Activated CD8-positive, alpha-beta memory T cell treated with anti-CD3 and anti-CD28 coated beads, Interleukin-2, amount 10 ng/mL, durations not matched to agents 7 days and 5 days (primary cell): ENCODE measurements at regions of chr6 and their contacts with region 1.

Region 1: GRCh38 chr6:144482142-144482541 is 197.0 kb downstream of the UTRN start:
- DNase-seq: peak; percentile 82
- ATAC-seq: peak; percentile 45
- H3K4me3 Mint-ChIP-seq: no peak overlapping the region
- H3K27ac Mint-ChIP-seq: peak overlapping the region; percentile 23
- H3K4me1 Mint-ChIP-seq: peaks cover 23% of the 10 kb centered on the region
- H3K27me3 Mint-ChIP-seq: no peaks in the 10 kb centered on the region

Region 2: DNA sequence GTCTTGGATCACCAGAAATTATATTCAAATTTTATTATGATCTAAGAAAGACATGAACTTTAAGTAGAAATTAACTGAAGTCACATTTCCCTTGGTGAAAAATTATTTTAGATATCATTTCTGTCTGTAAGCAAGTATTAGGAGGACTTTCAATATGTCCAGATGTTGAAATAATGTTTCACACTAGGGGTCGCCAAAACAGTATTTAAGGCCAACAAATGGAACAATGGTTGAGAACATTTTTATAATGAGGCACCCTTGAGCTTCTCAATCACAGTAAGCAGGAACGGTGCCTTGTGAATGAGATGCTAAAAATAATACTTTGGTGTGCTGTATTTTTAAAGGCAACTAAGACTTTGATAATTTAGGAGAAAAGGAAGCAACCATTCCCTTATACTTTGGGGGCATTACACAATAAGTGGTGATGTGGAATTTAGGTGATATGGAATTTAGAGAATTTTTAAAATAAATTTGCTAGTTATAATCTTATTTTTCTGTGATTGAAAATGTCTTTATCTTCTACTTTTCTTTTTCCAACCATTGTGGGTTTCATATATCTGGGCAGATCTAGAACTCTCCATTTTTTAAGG is 377.1 kb before region 1 on chr6:
- CTCF ChIA-PET with region 1: interaction called, 10 read pairs
- DNase-seq: no peak
- ATAC-seq: peak; percentile 73
- H3K4me3 Mint-ChIP-seq: no peak overlapping the region
- H3K27ac Mint-ChIP-seq: no peak overlapping the region
- H3K4me1 Mint-ChIP-seq: peaks cover 10% of the 10 kb centered on the region
- H3K27me3 Mint-ChIP-seq: no peaks in the 10 kb centered on the region

Region 3: DNA sequence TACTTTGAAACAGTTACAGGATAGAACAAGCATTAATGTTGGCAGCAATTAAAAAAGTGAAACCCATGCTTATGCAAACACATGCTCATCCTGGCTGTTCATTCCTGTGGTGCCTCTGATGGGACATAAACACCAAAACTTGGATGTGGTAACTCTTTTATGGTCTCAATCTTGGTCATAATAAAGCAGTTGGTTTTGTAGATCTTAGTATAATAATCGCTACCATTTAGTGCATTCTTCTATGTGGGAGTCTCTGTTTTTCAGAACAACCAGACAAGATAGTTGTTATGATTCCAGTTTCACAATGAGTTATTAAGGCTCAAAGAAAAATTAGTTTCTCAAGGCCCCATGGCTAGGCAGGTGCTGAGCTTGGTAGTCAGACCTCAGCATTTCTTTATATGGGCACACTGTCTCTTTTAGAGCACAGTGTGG is 13.0 kb before region 1 on chr6:
- CTCF ChIA-PET with region 1: interaction called, 13 read pairs
- DNase-seq: no peak
- ATAC-seq: peak; percentile 83
- H3K4me3 Mint-ChIP-seq: peak overlapping the region; percentile 41
- H3K27ac Mint-ChIP-seq: peak overlapping the region; percentile 75
- H3K4me1 Mint-ChIP-seq: peaks cover 24% of the 10 kb centered on the region
- H3K27me3 Mint-ChIP-seq: no peaks in the 10 kb centered on the region

Region 4: DNA sequence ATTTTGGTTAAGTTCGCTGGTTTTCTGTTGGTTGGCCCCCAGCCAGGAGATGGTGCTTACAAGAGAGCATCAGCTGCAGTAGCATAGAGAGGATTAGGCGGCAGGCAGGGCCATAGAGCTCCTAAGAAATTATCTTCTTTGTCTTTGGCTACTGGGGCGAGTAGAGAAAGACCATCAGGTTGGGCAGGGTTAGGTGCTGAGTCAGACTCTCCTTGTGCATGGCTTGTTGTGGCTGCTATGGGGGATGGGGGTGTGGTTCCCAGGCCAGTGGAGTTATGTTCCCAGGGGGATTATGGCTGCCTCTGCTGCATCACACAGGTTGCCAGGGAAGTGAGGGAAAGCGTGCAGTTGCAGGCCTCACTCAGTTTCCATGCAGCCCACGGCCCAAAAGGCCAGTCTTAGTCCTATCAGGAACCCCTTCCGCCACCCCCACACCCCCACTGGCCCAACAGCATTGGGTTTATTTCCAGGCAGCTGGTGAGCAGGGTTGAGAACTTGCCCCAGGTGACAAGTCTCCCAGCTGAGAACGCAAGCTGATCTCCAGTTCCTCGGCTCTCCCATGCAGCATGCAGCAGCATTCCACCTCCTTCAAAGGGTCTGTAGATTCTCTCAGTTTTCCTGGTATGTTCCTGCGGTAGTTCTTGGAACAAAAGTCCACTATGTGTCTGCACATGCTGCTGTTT is 46.7 kb after region 1 on chr6:
- CTCF ChIA-PET with region 1: no interaction called
- DNase-seq: no peak
- ATAC-seq: no peak
- H3K4me3 Mint-ChIP-seq: no peak overlapping the region
- H3K27ac Mint-ChIP-seq: no peak overlapping the region
- H3K4me1 Mint-ChIP-seq: peaks cover 6% of the 10 kb centered on the region
- H3K27me3 Mint-ChIP-seq: no peaks in the 10 kb centered on the region